CD8-positive, alpha-beta T cell (primary cell): ENCODE measurements at regions of chr5 and their contacts with region 1.

Region 1: DNA sequence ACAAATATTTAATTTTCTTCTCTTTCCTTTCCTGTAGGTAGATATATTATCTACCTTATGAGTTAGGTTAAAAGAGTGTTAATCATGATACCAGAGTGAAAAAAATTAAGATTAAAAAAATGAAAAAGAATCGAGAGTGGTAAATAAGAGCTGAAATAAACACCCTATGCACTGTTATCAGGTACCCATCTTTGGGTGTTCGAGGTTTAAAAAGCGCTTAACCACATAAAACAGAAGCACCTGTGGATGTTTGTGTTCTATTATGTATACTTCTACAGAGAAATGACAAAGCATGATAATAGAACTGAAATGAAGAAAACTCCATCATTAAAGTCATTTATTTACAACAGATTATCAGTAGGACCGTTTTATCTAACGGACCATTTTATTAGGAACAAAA is 25.7 kb upstream of the GCNT4 start:
- DNase-seq: peak in 2 of 9 experiments; percentile 40 to 48
- ATAC-seq: peak; percentile 80
- H3K4me3 ChIP-seq: no peak overlapping the region
- H3K4me3 Mint-ChIP-seq: no peak overlapping the region
- H3K27ac ChIP-seq: no peak overlapping the region
- H3K27ac Mint-ChIP-seq: no peak overlapping the region
- H3K4me1 ChIP-seq: no peaks in the 10 kb centered on the region
- H3K4me1 Mint-ChIP-seq: peaks cover 14% of the 10 kb centered on the region
- H3K27me3 ChIP-seq: no peaks in the 10 kb centered on the region
- H3K27me3 Mint-ChIP-seq: no peaks in the 10 kb centered on the region
- CTCF ChIP-seq: no peak

Region 2: GRCh38 chr5:75059912-75060545 is 18.0 kb before region 1 on chr5:
- CTCF ChIA-PET with region 1: interaction called, 3 read pairs
- POLR2A ChIA-PET with region 1: interaction called, 4 read pairs
- intact Hi-C with region 1: loop called in 1 of 2 experiments (anchors 2 kb)
- DNase-seq: peak in 5 of 9 experiments; percentile 49 to 88 (median 75)
- ATAC-seq: peak; percentile 88
- H3K4me3 ChIP-seq: no peak overlapping the region
- H3K4me3 Mint-ChIP-seq: peak overlapping the region; percentile 13
- H3K27ac ChIP-seq: peak overlapping the region; percentile 70 to 72
- H3K27ac Mint-ChIP-seq: peak overlapping the region; percentile 91
- H3K4me1 ChIP-seq: peaks cover 81% of the 10 kb centered on the region
- H3K4me1 Mint-ChIP-seq: peaks cover 81% of the 10 kb centered on the region
- H3K27me3 ChIP-seq: no peaks in the 10 kb centered on the region
- H3K27me3 Mint-ChIP-seq: no peaks in the 10 kb centered on the region
- CTCF ChIP-seq: no peak

Region 3: DNA sequence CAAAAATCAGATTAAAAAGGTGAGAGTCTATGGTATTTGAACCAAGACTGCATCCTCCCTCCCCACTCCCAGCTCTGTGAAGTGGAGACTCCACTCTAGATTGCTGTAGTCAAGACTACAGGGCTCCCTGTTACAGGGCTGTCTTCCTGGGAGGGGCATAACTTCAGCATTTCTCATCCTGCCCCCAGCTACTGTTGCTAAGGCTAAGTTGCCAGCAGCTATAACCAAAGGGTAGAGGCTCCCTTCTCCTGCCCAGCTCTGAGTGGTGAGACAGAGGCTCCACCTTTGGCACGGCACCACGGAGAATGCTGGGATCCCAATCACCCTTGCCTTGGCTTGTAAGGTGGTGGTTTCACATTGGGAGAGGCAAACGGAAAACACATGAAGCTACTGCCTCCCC is 13.6 kb after region 1 on chr5:
- CTCF ChIA-PET with region 1: no interaction called
- POLR2A ChIA-PET with region 1: no interaction called
- intact Hi-C with region 1: loop called in 1 of 2 experiments (anchors 2 kb)
- DNase-seq: no peak
- ATAC-seq: no peak
- H3K4me3 ChIP-seq: no peak overlapping the region
- H3K4me3 Mint-ChIP-seq: no peak overlapping the region
- H3K27ac ChIP-seq: no peak overlapping the region
- H3K27ac Mint-ChIP-seq: no peak overlapping the region
- H3K4me1 ChIP-seq: no peaks in the 10 kb centered on the region
- H3K4me1 Mint-ChIP-seq: peaks cover 20% of the 10 kb centered on the region
- H3K27me3 ChIP-seq: no peaks in the 10 kb centered on the region
- H3K27me3 Mint-ChIP-seq: no peaks in the 10 kb centered on the region
- CTCF ChIP-seq: no peak